Naive thymus-derived CD4-positive, alpha-beta T cell (primary cell): ENCODE measurements at regions of chr17 and their contacts with region 1.

Region 1: GRCh38 chr17:64984851-64985521 is 65.7 kb upstream of the LRRC37A3 start:
- DNase-seq: peak in 8 of 9 donors; percentile 37 to 86 (median 62)
- ATAC-seq: peak; percentile 60
- H3K4me3 ChIP-seq: peak overlapping the region; percentile 52
- H3K4me3 Mint-ChIP-seq: peak overlapping the region; percentile 76 to 96 (median 80)
- H3K27ac ChIP-seq: peak overlapping the region; percentile 88
- H3K27ac Mint-ChIP-seq: peak overlapping the region; percentile 96 to 100 (median 98)
- H3K4me1 ChIP-seq: peaks cover 24 to 35% of the 10 kb centered on the region in 2 donors
- H3K4me1 Mint-ChIP-seq: peaks cover 13 to 52% (median 32%) of the 10 kb centered on the region in 7 donors
- H3K27me3 ChIP-seq: no peaks in the 10 kb centered on the region
- H3K27me3 Mint-ChIP-seq: no peaks in the 10 kb centered on the region

Region 2: GRCh38 chr17:64968652-64969501 is 16.1 kb before region 1 on chr17:
- CTCF ChIA-PET with region 1: interaction called, 8 read pairs
- POLR2A ChIA-PET with region 1: interaction called, 88 read pairs
- intact Hi-C with region 1: loop called (anchors 2 kb)
- DNase-seq: peak in 3 of 9 donors; percentile 23 to 31 (median 27)
- ATAC-seq: peak; percentile 4
- H3K4me3 ChIP-seq: peak overlapping the region; percentile 19
- H3K4me3 Mint-ChIP-seq: peak overlapping the region; percentile 45 to 78 (median 66)
- H3K27ac ChIP-seq: peak overlapping the region; percentile 69
- H3K27ac Mint-ChIP-seq: peak overlapping the region; percentile 70 to 94 (median 85)
- H3K4me1 ChIP-seq: peaks cover 31 to 55% of the 10 kb centered on the region in 2 donors
- H3K4me1 Mint-ChIP-seq: peaks cover 27 to 70% (median 53%) of the 10 kb centered on the region in 7 donors
- H3K27me3 ChIP-seq: no peaks in the 10 kb centered on the region
- H3K27me3 Mint-ChIP-seq: no peaks in the 10 kb centered on the region

Region 3: DNA sequence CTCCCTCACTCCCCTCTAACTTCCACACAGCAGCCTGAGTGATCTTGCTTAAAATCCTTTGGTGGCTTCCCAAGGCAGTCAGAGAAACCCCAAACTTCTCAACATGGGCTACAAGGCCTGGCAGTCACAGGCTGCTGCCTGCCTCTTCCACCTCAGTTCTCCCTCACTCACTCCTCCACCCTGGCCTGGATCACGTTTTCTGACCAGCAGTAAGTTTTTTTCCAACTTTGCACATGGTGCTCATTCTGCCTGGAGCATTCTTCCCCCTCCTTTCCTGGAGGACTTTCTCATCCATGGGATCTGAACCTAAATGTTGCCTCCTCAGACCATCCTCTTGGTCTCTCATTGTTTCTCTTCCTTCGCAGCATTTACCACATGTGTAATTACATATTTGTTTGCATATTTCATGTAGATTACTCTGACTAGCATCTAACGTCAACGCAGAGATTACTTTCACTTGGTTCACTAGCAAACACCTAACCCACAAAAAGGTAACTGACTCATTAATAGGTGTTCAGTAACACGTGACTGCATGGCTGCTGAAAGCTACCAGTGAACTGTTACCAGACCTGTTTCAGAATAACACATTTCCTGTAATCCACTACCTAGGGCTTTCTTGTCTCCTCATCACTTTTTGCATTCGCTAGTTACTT is 54.5 kb after region 1 on chr17:
- CTCF ChIA-PET with region 1: no interaction called
- POLR2A ChIA-PET with region 1: interaction called, 8 read pairs
- intact Hi-C with region 1: loop called in 1 of 2 experiments (anchors 1 kb)
- DNase-seq: peak in 7 of 9 donors; percentile 55 to 85 (median 77)
- ATAC-seq: peak; percentile 95
- H3K4me3 ChIP-seq: peak overlapping the region; percentile 18
- H3K4me3 Mint-ChIP-seq: peak overlapping the region; percentile 34 to 92 (median 78)
- H3K27ac ChIP-seq: peak overlapping the region; percentile 79
- H3K27ac Mint-ChIP-seq: peak overlapping the region; percentile 78 to 97 (median 93)
- H3K4me1 ChIP-seq: peaks cover 55 to 68% of the 10 kb centered on the region in 2 donors
- H3K4me1 Mint-ChIP-seq: peaks cover 67 to 90% (median 83%) of the 10 kb centered on the region in 7 donors
- H3K27me3 ChIP-seq: no peaks in the 10 kb centered on the region
- H3K27me3 Mint-ChIP-seq: no peaks in the 10 kb centered on the region

Region 4: DNA sequence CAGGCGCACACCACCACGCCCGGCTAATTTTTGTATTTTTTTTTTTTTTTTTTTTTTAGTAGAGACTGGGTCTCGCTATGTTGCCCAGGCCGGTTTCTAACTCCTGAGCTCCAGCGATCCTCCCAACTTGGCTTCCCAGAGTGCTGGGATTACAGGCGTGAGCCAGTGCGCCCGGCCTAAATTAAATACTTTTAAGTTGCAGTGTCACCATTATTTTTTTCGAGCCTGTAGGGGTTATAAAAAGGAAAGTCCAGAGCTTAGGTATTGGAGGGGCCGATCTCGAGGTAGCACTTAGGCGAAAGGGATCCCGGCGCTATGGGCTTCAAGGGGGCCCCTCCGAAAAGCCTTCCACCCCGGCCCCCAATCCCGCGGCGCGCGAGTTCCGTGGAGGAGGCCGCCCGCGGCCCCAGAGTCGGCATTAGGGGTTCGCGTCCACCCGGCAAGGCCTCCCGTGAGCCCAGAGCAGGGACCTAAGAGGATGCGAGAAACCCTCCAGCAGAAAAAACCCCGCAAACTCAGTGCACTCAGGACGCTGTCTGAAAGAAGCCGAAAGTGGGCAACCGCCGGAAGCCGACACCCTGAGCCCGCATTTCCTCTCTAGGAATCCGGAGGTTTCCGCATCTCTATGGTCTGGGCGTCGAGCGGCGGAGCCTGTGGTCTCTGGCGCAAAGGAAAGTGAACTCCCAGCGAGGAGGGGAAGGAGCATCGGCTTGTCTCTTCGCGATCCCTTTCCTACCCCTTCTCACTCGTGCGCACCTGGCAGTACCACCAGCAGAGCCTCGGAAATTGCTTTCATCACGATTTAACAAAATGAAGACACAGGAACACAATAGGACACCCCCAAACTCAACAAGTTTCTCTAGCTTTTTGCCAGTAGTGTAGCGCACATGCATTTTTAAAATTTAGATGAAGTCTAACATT is 138.1 kb after region 1 on chr17:
- CTCF ChIA-PET with region 1: no interaction called
- POLR2A ChIA-PET with region 1: interaction called, 4 read pairs
- intact Hi-C with region 1: loop called in 1 of 2 experiments (anchors 2 kb)
- DNase-seq: peak; percentile 60 to 91 (median 84)
- ATAC-seq: peak; percentile 98
- H3K4me3 ChIP-seq: peak overlapping the region; percentile 43
- H3K4me3 Mint-ChIP-seq: peak overlapping the region; percentile 74 to 95 (median 92)
- H3K27ac ChIP-seq: peak overlapping the region; percentile 74
- H3K27ac Mint-ChIP-seq: peak overlapping the region; percentile 88 to 99 (median 98)
- H3K4me1 ChIP-seq: peaks cover 0 to 3% of the 10 kb centered on the region in 2 donors
- H3K4me1 Mint-ChIP-seq: peaks cover 9 to 32% (median 10%) of the 10 kb centered on the region in 7 donors
- H3K27me3 ChIP-seq: no peaks in the 10 kb centered on the region
- H3K27me3 Mint-ChIP-seq: peaks cover 0 to 12% (median 4%) of the 10 kb centered on the region in 5 donors